Head of caudate nucleus (tissue), 42 donors: ENCODE measurements at regions of chr7 and their contacts with region 1.

Region 1: DNA sequence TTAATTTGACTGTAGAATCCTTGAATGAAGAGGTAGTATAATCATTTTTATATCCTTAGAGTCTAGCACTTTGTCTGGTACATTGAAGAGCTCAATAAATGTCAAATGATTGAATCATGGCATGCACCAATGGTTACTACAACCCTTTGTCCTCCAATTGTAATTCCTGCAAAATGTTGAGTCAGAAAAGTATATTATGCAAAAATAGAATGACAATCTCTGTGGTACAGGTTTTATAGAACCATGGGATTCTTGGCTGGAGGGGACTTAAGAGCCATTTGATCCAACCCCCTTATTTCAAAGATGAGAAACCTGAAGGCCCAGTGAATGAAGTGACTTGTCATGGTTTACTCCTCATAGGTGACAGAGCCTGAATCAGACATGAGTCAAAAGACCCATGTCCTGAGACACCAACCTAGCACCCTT is 30.9 kb upstream of the SMKR1 start:
- DNase-seq: no peak

Region 2: GRCh38 chr7:129218514-129219062 is 252.8 kb before region 1 on chr7:
- intact Hi-C with region 1: loop called (anchors 5 kb)
- DNase-seq: peak; percentile 56 to 95 (median 86)

Region 3: GRCh38 chr7:129367700-129368388 is 103.6 kb before region 1 on chr7:
- intact Hi-C with region 1: loop called (anchors 5 kb)
- DNase-seq: peak; percentile 59 to 92 (median 84)